ENCODE measurements at regions of chr2 and their contacts with region 1.

Region 1: GRCh38 chr2:189347540-189347939 is 93.7 kb upstream of the WDR75 start:
- DNase-seq: peak; percentile 96
- ATAC-seq: peak; percentile 90
- H3K4me3 ChIP-seq: no peak overlapping the region
- H3K27ac ChIP-seq: peak overlapping the region; percentile 89; the same call in 1 of the 2 replicates
- H3K4me1 ChIP-seq: peaks cover 8% of the 10 kb centered on the region
- H3K27me3 ChIP-seq: no peaks in the 10 kb centered on the region
- CTCF ChIP-seq: peak; percentile 65
- POLR2A ChIP-seq: no peak
- RAD21 ChIP-seq: peak; percentile 89

Region 2: GRCh38 chr2:188845692-188846091 is 501.8 kb before region 1 on chr2:
- CTCF ChIA-PET with region 1: no interaction called
- POLR2A ChIA-PET with region 1: no interaction called
- dilution Hi-C with region 1: no loop called
- in situ Hi-C with region 1: no loop called
- intact Hi-C with region 1: no loop called
- DNase-seq: no peak
- ATAC-seq: no peak
- H3K4me3 ChIP-seq: no peak overlapping the region
- H3K27ac ChIP-seq: no peak overlapping the region
- H3K4me1 ChIP-seq: no peaks in the 10 kb centered on the region
- H3K27me3 ChIP-seq: no peaks in the 10 kb centered on the region
- CTCF ChIP-seq: no peak
- POLR2A ChIP-seq: no peak
- RAD21 ChIP-seq: no peak

Region 3: DNA sequence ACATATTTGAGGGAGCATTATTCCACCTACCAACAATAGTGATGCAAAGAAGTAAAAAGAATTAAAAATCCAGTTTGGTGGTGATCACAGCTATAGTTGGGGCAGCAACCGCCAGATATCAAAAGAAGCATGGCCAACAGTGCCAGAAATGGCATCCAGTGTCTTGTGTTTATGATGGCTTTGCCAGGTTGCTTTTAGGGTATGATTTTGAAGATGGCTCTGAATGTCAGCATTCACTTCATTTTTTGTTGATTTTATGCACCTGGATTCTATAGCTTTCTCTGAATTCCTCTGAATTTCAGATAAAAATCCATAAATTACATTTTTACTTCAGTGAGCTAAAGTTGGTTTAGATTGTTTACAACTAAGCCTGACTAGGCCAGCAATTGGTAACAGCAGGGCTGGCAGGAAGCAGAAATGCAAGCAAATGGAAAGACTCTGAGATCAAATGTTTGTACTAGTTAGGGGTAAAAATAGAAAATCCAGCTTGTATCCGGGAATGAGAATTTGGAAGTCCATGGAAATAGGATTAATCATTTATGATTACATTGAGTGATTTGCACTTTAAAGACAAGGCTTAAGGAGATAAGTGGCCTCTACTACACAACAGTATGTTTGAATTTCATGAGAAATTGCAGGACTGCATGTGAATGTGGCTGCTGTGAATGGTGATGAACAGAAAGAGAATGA is 332.9 kb before region 1 on chr2:
- CTCF ChIA-PET with region 1: no interaction called
- POLR2A ChIA-PET with region 1: no interaction called
- dilution Hi-C with region 1: no loop called
- in situ Hi-C with region 1: no loop called
- intact Hi-C with region 1: loop called (anchors 5 kb)
- DNase-seq: peak; percentile 76
- ATAC-seq: peak; percentile 43
- H3K4me3 ChIP-seq: no peak overlapping the region
- H3K27ac ChIP-seq: peak overlapping the region; percentile 77
- H3K4me1 ChIP-seq: peaks cover 9% of the 10 kb centered on the region; the same call in 1 of the 2 replicates
- H3K27me3 ChIP-seq: no peaks in the 10 kb centered on the region
- CTCF ChIP-seq: no peak
- POLR2A ChIP-seq: no peak
- RAD21 ChIP-seq: no peak

Region 4: GRCh38 chr2:189096769-189097447 is 250.6 kb before region 1 on chr2:
- CTCF ChIA-PET with region 1: interaction called, 8 read pairs
- POLR2A ChIA-PET with region 1: no interaction called
- dilution Hi-C with region 1: no loop called
- in situ Hi-C with region 1: no loop called
- intact Hi-C with region 1: loop called (anchors 1 kb)
- DNase-seq: peak; percentile 95
- ATAC-seq: peak; percentile 82
- H3K4me3 ChIP-seq: no peak overlapping the region
- H3K27ac ChIP-seq: peak overlapping the region; percentile 99
- H3K4me1 ChIP-seq: peaks cover 10% of the 10 kb centered on the region
- H3K27me3 ChIP-seq: no peaks in the 10 kb centered on the region
- CTCF ChIP-seq: no peak
- POLR2A ChIP-seq: no peak
- RAD21 ChIP-seq: no peak

Region 5: DNA sequence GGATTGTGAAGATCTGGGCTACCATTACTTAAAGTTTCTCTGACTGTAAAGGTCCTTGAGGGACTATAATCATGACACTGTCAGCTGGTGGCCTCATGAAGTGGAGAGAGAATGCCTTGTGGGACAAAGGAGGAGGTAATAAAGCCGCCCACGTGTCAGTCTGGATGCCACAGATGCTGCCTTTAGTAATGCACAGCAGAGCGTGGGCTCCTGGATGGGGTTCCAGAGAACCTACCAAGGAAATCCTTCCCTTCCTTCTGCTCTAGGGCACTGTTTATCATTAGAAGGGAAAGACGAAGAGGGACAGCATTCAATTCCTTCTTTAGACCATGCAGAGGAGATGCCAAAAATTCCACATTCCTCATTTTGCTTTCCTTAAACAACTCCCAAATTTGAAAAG is 231.4 kb before region 1 on chr2:
- CTCF ChIA-PET with region 1: no interaction called
- POLR2A ChIA-PET with region 1: no interaction called
- dilution Hi-C with region 1: no loop called
- in situ Hi-C with region 1: no loop called
- intact Hi-C with region 1: no loop called
- DNase-seq: no peak
- ATAC-seq: peak; percentile 13; the same call in 1 of the 2 replicates
- H3K4me3 ChIP-seq: no peak overlapping the region
- H3K27ac ChIP-seq: peak overlapping the region; percentile 61
- H3K4me1 ChIP-seq: peaks cover 17% of the 10 kb centered on the region
- H3K27me3 ChIP-seq: no peaks in the 10 kb centered on the region
- CTCF ChIP-seq: no peak
- POLR2A ChIP-seq: no peak
- RAD21 ChIP-seq: no peak

Region 6: GRCh38 chr2:189164746-189165145 is 182.8 kb before region 1 on chr2:
- CTCF ChIA-PET with region 1: no interaction called
- POLR2A ChIA-PET with region 1: no interaction called
- dilution Hi-C with region 1: no loop called
- in situ Hi-C with region 1: no loop called
- intact Hi-C with region 1: no loop called
- DNase-seq: peak; percentile 80
- ATAC-seq: peak; percentile 33
- H3K4me3 ChIP-seq: no peak overlapping the region
- H3K27ac ChIP-seq: no peak overlapping the region
- H3K4me1 ChIP-seq: peaks cover 21% of the 10 kb centered on the region
- H3K27me3 ChIP-seq: no peaks in the 10 kb centered on the region
- CTCF ChIP-seq: no peak
- POLR2A ChIP-seq: no peak
- RAD21 ChIP-seq: no peak

Region 7: DNA sequence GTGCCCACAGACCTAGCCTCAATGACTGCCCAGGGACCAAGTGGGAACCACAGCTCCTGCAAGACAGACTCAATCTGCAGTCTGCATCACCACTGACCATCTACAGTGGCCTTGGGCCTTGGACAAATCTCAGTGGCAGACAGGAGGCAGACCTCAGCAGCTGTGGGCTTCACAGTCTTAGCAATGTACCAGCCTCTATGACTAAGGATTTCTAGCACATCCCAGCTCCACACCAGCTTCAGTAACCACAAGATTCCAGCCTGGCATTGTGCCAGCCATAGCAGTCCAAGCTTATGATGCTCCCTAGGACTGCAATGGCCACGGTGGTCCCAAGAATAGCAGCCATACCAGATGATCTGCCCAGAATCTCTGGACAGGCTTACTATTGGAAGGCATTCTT is 74.1 kb after region 1 on chr2:
- CTCF ChIA-PET with region 1: no interaction called
- POLR2A ChIA-PET with region 1: no interaction called
- dilution Hi-C with region 1: no loop called
- in situ Hi-C with region 1: no loop called
- intact Hi-C with region 1: no loop called
- DNase-seq: peak; percentile 89
- ATAC-seq: peak; percentile 95
- H3K4me3 ChIP-seq: no peak overlapping the region
- H3K27ac ChIP-seq: no peak overlapping the region
- H3K4me1 ChIP-seq: peaks cover 2% of the 10 kb centered on the region
- H3K27me3 ChIP-seq: no peaks in the 10 kb centered on the region
- CTCF ChIP-seq: no peak
- POLR2A ChIP-seq: no peak
- RAD21 ChIP-seq: no peak